CD4-positive, alpha-beta T cell (primary cell): ENCODE measurements at regions of chr17 and their contacts with region 1.

Region 1: GRCh38 chr17:63621766-63622519 is at the start of gene MAP3K3:
- DNase-seq: peak; percentile 91 to 100 (median 95)
- ATAC-seq: peak; percentile 90
- H3K4me3 ChIP-seq: peak within 1 kb of the TSS; percentile 72
- H3K4me3 Mint-ChIP-seq: peak within 1 kb of the TSS; percentile 99
- H3K27ac ChIP-seq: peak within 1 kb of the TSS; percentile 51 to 69
- H3K27ac Mint-ChIP-seq: peak within 1 kb of the TSS; percentile 88
- H3K4me1 ChIP-seq: peaks cover 25% of the 10 kb centered on the region
- H3K4me1 Mint-ChIP-seq: peaks cover 44% of the 10 kb centered on the region
- H3K27me3 ChIP-seq: no peaks in the 10 kb centered on the region
- H3K27me3 Mint-ChIP-seq: no peaks in the 10 kb centered on the region
- CTCF ChIP-seq: no peak
- total RNA-seq, gene MAP3K3: 75.8 to 78.1 TPM

Region 2: GRCh38 chr17:63434876-63435684 is 186.9 kb before region 1 on chr17:
- CTCF ChIA-PET with region 1: no interaction called
- POLR2A ChIA-PET with region 1: interaction called, 15 read pairs
- intact Hi-C with region 1: no loop called
- DNase-seq: peak in 11 of 14 experiments; percentile 29 to 80 (median 43)
- ATAC-seq: peak; percentile 92
- H3K4me3 ChIP-seq: no peak overlapping the region
- H3K4me3 Mint-ChIP-seq: peak overlapping the region; percentile 60
- H3K27ac ChIP-seq: no peak overlapping the region
- H3K27ac Mint-ChIP-seq: peak overlapping the region; percentile 76
- H3K4me1 ChIP-seq: peaks cover 65% of the 10 kb centered on the region
- H3K4me1 Mint-ChIP-seq: peaks cover 19% of the 10 kb centered on the region
- H3K27me3 ChIP-seq: no peaks in the 10 kb centered on the region
- H3K27me3 Mint-ChIP-seq: no peaks in the 10 kb centered on the region
- CTCF ChIP-seq: no peak

Region 3: GRCh38 chr17:63600569-63601438 is 21.1 kb before region 1 on chr17 and contains the start of gene TACO1:
- CTCF ChIA-PET with region 1: no interaction called
- POLR2A ChIA-PET with region 1: interaction called, 25 read pairs
- intact Hi-C with region 1: no loop called
- DNase-seq: peak; percentile 57 to 86 (median 73)
- ATAC-seq: peak; percentile 84
- H3K4me3 ChIP-seq: peak within 1 kb of the TSS; percentile 94
- H3K4me3 Mint-ChIP-seq: peak within 1 kb of the TSS; percentile 90
- H3K27ac ChIP-seq: peak within 1 kb of the TSS; percentile 60 to 69
- H3K27ac Mint-ChIP-seq: peak within 1 kb of the TSS; percentile 87
- H3K4me1 ChIP-seq: peaks cover 45% of the 10 kb centered on the region
- H3K4me1 Mint-ChIP-seq: peaks cover 40% of the 10 kb centered on the region
- H3K27me3 ChIP-seq: no peaks in the 10 kb centered on the region
- H3K27me3 Mint-ChIP-seq: no peaks in the 10 kb centered on the region
- CTCF ChIP-seq: no peak
- total RNA-seq, gene TACO1: 11.3 to 13.2 TPM

Region 4: DNA sequence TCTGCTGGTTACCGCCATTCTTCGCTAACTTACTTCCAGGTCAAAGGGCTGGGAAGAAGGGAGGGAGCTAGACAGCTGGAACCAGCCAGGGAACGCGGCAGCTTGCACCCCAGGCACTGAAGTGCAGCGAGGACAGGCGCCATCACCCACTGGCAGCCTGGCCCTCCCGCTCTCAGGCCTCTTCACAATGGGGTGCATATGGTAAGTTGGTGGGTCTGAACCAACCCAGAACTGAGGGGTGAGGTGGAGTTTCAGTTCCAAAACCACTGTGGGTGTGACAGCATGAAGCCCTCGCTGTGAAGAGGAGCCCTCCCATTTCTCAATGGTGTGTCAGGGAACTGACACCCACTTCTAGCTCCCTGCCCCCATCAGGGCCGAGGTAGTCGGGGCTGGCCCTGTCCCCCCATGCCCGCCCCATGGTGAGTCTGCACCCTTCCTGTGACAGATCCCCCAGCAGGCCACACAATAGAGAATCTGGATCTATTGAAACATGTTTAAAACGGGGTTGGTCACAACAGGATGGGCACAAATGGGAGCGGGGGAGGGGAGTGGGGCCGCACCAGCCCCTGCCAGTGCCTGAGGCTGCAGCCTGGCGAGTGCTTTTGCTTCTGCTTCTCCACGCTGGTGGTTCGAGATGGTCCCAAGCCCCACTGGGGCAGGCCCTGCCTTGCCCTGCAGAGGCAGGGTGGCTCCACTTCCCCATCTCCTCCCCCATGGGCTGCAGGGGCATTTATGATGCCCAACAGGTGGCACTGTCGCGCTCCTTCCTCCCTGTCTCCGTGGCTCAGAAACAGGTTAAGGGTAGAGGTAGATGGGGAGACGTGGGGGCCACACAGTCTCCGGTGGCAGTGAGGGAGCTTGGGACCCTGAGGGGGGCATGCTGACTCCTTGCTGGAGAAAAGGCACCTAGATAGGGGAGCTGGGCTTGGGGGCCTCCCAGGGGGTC is 75.7 kb after region 1 on chr17:
- CTCF ChIA-PET with region 1: interaction called, 5 read pairs
- POLR2A ChIA-PET with region 1: interaction called, 69 read pairs
- intact Hi-C with region 1: loop called in 1 of 2 experiments (anchors 2 kb)
- DNase-seq: peak; percentile 77 to 92 (median 84)
- ATAC-seq: peak; percentile 33
- H3K4me3 ChIP-seq: peak overlapping the region; percentile 98
- H3K4me3 Mint-ChIP-seq: peak overlapping the region; percentile 100
- H3K27ac ChIP-seq: peak overlapping the region; percentile 73 to 91
- H3K27ac Mint-ChIP-seq: peak overlapping the region; percentile 100
- H3K4me1 ChIP-seq: peaks cover 78% of the 10 kb centered on the region
- H3K4me1 Mint-ChIP-seq: peaks cover 74% of the 10 kb centered on the region
- H3K27me3 ChIP-seq: no peaks in the 10 kb centered on the region
- H3K27me3 Mint-ChIP-seq: peaks cover 5% of the 10 kb centered on the region
- CTCF ChIP-seq: peak; percentile 82

Region 5: GRCh38 chr17:63741221-63742049 is 119.5 kb after region 1 on chr17 and contains the start of gene STRADA:
- CTCF ChIA-PET with region 1: no interaction called
- POLR2A ChIA-PET with region 1: interaction called, 8 read pairs
- intact Hi-C with region 1: loop called in 1 of 2 experiments (anchors 2 kb)
- DNase-seq: peak; percentile 98 to 100 (median 99)
- ATAC-seq: peak; percentile 88
- H3K4me3 ChIP-seq: peak within 1 kb of the TSS; percentile 95
- H3K4me3 Mint-ChIP-seq: peak within 1 kb of the TSS; percentile 93
- H3K27ac ChIP-seq: peak within 1 kb of the TSS; percentile 94
- H3K27ac Mint-ChIP-seq: peak within 1 kb of the TSS; percentile 91
- H3K4me1 ChIP-seq: peaks cover 33% of the 10 kb centered on the region
- H3K4me1 Mint-ChIP-seq: peaks cover 24% of the 10 kb centered on the region
- H3K27me3 ChIP-seq: no peaks in the 10 kb centered on the region
- H3K27me3 Mint-ChIP-seq: no peaks in the 10 kb centered on the region
- CTCF ChIP-seq: no peak
- total RNA-seq, gene STRADA: 50.9 to 51.0 TPM

Region 6: GRCh38 chr17:63842540-63843386 is 220.8 kb after region 1 on chr17 and contains the start of gene SMARCD2:
- CTCF ChIA-PET with region 1: no interaction called
- POLR2A ChIA-PET with region 1: interaction called, 9 read pairs
- intact Hi-C with region 1: loop called (anchors 5 to 10 kb)
- DNase-seq: peak; percentile 98 to 100 (median 99)
- ATAC-seq: peak; percentile 88
- H3K4me3 ChIP-seq: peak within 1 kb of the TSS; percentile 85
- H3K4me3 Mint-ChIP-seq: peak within 1 kb of the TSS; percentile 94
- H3K27ac ChIP-seq: peak within 1 kb of the TSS; percentile 85 to 93
- H3K27ac Mint-ChIP-seq: peak within 1 kb of the TSS; percentile 91
- H3K4me1 ChIP-seq: peaks cover 57% of the 10 kb centered on the region
- H3K4me1 Mint-ChIP-seq: peaks cover 50% of the 10 kb centered on the region
- H3K27me3 ChIP-seq: no peaks in the 10 kb centered on the region
- H3K27me3 Mint-ChIP-seq: no peaks in the 10 kb centered on the region
- CTCF ChIP-seq: no peak
- total RNA-seq, gene SMARCD2: 102 to 111 TPM

Region 7: GRCh38 chr17:63931099-63931561 is 309.2 kb after region 1 on chr17:
- CTCF ChIA-PET with region 1: no interaction called
- POLR2A ChIA-PET with region 1: no interaction called
- intact Hi-C with region 1: no loop called
- DNase-seq: peak; percentile 24 to 85 (median 60)
- ATAC-seq: peak; percentile 78
- H3K4me3 ChIP-seq: peak overlapping the region; percentile 69
- H3K4me3 Mint-ChIP-seq: peak overlapping the region; percentile 92
- H3K27ac ChIP-seq: peak overlapping the region; percentile 60 to 63
- H3K27ac Mint-ChIP-seq: peak overlapping the region; percentile 92
- H3K4me1 ChIP-seq: peaks cover 33% of the 10 kb centered on the region
- H3K4me1 Mint-ChIP-seq: peaks cover 26% of the 10 kb centered on the region
- H3K27me3 ChIP-seq: no peaks in the 10 kb centered on the region
- H3K27me3 Mint-ChIP-seq: no peaks in the 10 kb centered on the region
- CTCF ChIP-seq: no peak